Caco-2 (cell line): ENCODE measurements at regions of chr2 and their contacts with region 1.

Region 1: GRCh38 chr2:201118121-201118960 is 2.4 kb downstream of the CFLAR start:
- DNase-seq: peak; percentile 89 to 91
- H3K4me3 ChIP-seq: peak overlapping the region; percentile 85
- H3K4me3 Mint-ChIP-seq: peak overlapping the region; percentile 98
- H3K27ac Mint-ChIP-seq: peak overlapping the region; percentile 91
- H3K4me1 ChIP-seq: peaks cover 42% of the 10 kb centered on the region
- H3K4me1 Mint-ChIP-seq: peaks cover 39% of the 10 kb centered on the region
- H3K27me3 ChIP-seq: no peaks in the 10 kb centered on the region
- H3K27me3 Mint-ChIP-seq: no peaks in the 10 kb centered on the region
- CTCF ChIP-seq: peak; percentile 16 to 58

Region 2: DNA sequence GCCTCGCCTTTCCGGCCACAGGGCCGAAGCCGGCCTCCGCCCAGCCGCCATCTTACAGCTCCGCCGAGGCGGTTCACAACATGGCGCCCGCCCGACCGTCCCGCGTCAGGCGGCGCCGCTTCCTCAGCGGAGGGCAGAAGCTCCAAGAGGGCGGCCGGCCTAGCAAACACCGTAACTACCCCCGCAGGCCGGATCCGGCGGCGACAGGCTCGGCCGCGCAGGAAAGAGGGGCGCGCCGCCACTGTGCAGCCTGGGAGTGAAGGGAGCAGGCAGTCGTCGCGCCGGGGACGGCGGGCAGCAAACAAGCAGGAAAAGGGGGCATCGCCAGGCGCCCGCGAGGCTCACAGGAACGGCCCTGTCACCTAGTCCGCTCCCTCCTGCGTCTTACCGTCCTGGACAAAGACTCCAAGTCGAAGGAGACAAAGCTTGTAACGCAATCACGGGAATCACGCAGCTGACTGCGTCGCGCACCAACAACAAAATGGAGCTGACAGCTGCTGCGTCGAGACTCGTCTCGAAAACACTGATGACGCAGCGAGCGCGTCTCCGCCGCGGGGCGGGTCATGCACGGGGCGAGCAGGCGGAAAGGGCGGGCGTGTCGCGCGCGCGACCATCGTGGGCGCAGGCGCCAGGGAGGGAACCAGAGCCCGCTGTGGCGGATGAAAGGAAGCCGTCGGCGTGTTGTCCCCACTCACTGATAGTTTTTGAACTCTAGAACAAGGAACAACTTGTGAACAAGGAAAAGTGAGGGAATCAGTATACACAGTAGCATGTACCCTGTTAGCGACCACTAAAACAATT is 254.0 kb before region 1 on chr2 and contains the start of gene CLK1:
- CTCF ChIA-PET with region 1: no interaction called
- POLR2A ChIA-PET with region 1: interaction called, 10 read pairs
- intact Hi-C with region 1: no loop called
- DNase-seq: peak; percentile 94
- H3K4me3 ChIP-seq: peak within 1 kb of the TSS; percentile 96
- H3K4me3 Mint-ChIP-seq: peak within 1 kb of the TSS; percentile 84
- H3K27ac Mint-ChIP-seq: peak within 1 kb of the TSS; percentile 96
- H3K4me1 ChIP-seq: peaks cover 14% of the 10 kb centered on the region
- H3K4me1 Mint-ChIP-seq: peaks cover 25% of the 10 kb centered on the region
- H3K27me3 ChIP-seq: no peaks in the 10 kb centered on the region
- H3K27me3 Mint-ChIP-seq: no peaks in the 10 kb centered on the region
- CTCF ChIP-seq: no peak
- total RNA-seq, gene CLK1: 62.6 and 68.0 TPM in 2 replicates

Region 3: DNA sequence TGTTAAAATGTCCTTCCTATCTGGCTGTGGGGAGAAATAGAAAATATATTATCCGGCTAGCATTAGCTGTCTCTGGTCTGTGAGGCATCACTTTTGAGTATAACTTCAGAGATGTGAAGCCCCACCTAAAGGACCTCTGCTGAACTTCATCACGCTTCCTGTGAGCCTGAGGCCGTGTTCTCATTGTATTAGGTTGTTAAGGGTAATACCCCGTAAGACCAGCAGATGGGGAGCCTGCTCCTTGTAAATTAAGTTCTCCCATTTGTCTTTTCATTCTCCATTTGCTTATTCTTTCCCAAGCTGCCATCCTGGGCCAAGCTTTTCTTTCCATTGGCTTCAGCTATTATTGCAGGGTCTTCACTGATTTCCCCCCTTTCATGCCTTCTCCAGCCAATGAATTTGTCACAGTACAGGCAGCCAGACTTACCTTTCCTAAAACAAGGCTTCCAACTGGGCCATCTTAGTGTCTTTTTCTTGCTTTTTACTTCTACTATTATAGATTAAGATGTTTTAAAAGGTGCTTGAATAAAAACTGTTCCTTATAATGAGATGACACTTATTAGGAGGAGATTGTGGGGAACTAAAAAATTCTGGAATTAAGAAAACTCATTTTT is 216.8 kb before region 1 on chr2:
- CTCF ChIA-PET with region 1: interaction called, 4 read pairs
- POLR2A ChIA-PET with region 1: no interaction called
- intact Hi-C with region 1: loop called (anchors 1 kb)
- DNase-seq: peak; percentile 84 to 86
- H3K4me3 ChIP-seq: no peak overlapping the region
- H3K4me3 Mint-ChIP-seq: no peak overlapping the region
- H3K27ac Mint-ChIP-seq: no peak overlapping the region
- H3K4me1 ChIP-seq: no peaks in the 10 kb centered on the region
- H3K4me1 Mint-ChIP-seq: peaks cover 6% of the 10 kb centered on the region
- H3K27me3 ChIP-seq: no peaks in the 10 kb centered on the region
- H3K27me3 Mint-ChIP-seq: no peaks in the 10 kb centered on the region
- CTCF ChIP-seq: peak; percentile 85 to 90

Region 4: GRCh38 chr2:201008296-201008829 is 110.0 kb before region 1 on chr2:
- CTCF ChIA-PET with region 1: no interaction called
- POLR2A ChIA-PET with region 1: no interaction called
- intact Hi-C with region 1: loop called (anchors 2 kb)
- DNase-seq: peak; percentile 78 to 87
- H3K4me3 ChIP-seq: no peak overlapping the region
- H3K4me3 Mint-ChIP-seq: peak overlapping the region; percentile 31
- H3K27ac Mint-ChIP-seq: peak overlapping the region; percentile 75
- H3K4me1 ChIP-seq: peaks cover 28% of the 10 kb centered on the region
- H3K4me1 Mint-ChIP-seq: peaks cover 19% of the 10 kb centered on the region
- H3K27me3 ChIP-seq: no peaks in the 10 kb centered on the region
- H3K27me3 Mint-ChIP-seq: no peaks in the 10 kb centered on the region
- CTCF ChIP-seq: no peak

Region 5: DNA sequence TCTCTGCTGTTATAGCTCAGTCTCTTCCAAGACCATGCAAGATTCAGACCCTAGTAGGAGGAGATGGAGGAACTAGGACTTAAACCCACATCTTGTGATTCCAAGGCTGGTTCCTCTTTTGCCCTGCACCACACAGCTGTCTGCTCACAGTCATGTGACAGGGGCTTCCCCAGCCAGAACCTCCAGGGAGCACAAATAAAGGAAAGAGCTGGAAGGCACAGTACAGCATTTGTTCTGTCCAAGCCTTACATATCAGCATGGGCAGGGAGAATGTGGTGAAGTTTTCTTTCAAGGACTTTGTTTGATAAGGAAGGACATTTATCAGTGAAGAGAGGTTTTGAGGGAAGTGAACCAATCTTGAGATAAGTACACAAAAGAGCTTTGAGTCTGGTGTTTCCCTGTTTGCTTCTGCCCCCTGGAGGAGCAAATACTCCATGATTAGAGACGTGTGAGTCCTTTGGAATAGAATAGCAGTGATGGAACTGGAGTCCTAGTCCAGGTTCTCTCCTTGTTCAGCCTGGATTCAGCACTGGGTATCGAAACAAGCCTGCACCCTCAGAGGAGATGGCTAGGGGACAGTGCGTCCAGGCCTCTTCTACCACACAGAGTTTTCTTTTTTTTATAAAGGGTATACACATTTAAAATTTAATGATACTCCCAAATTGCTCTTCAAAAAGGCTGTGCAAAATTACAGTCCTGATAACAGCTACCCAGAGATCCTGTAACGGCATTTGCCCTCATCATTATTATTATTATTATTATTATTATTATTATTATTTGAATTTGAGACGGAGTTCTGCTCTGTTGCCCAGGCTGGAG is 40.0 kb after region 1 on chr2:
- CTCF ChIA-PET with region 1: interaction called, 17 read pairs
- POLR2A ChIA-PET with region 1: interaction called, 6 read pairs
- intact Hi-C with region 1: loop called (anchors 1 kb)
- DNase-seq: peak; percentile 84 to 86
- H3K4me3 ChIP-seq: no peak overlapping the region
- H3K4me3 Mint-ChIP-seq: peak overlapping the region; percentile 40
- H3K27ac Mint-ChIP-seq: peak overlapping the region; percentile 86
- H3K4me1 ChIP-seq: peaks cover 12% of the 10 kb centered on the region
- H3K4me1 Mint-ChIP-seq: peaks cover 13% of the 10 kb centered on the region
- H3K27me3 ChIP-seq: no peaks in the 10 kb centered on the region
- H3K27me3 Mint-ChIP-seq: no peaks in the 10 kb centered on the region
- CTCF ChIP-seq: peak; percentile 71 to 84